ENCODE measurements at regions of chr6 and their contacts with region 1.

Region 1: GRCh38 chr6:42104095-42104806 is 38.2 kb downstream of the C6orf132 start:
- DNase-seq: peak; percentile 40 to 85 (median 62)
- ATAC-seq: peak; percentile 90
- H3K4me3 ChIP-seq: peak overlapping the region; percentile 49
- H3K4me3 Mint-ChIP-seq: peak overlapping the region; percentile 63
- H3K27ac ChIP-seq: no peak overlapping the region
- H3K27ac Mint-ChIP-seq: no peak overlapping the region
- H3K4me1 ChIP-seq: peaks cover 11% of the 10 kb centered on the region
- H3K4me1 Mint-ChIP-seq: peaks cover 8% of the 10 kb centered on the region
- H3K27me3 ChIP-seq: no peaks in the 10 kb centered on the region
- H3K27me3 Mint-ChIP-seq: no peaks in the 10 kb centered on the region
- CTCF ChIP-seq: peak; percentile 92

Region 2: GRCh38 chr6:41779793-41780545 is 324.3 kb before region 1 on chr6 and contains the start of gene FRS3:
- CTCF ChIA-PET with region 1: interaction called, 3 read pairs
- POLR2A ChIA-PET with region 1: no interaction called
- intact Hi-C with region 1: loop called in 1 of 2 experiments (anchors 2 kb)
- DNase-seq: peak; percentile 95 to 100 (median 99)
- ATAC-seq: peak; percentile 97
- H3K4me3 ChIP-seq: peak within 1 kb of the TSS; percentile 75
- H3K4me3 Mint-ChIP-seq: peak within 1 kb of the TSS; percentile 99
- H3K27ac ChIP-seq: no peak within 1 kb of the TSS
- H3K27ac Mint-ChIP-seq: peak within 1 kb of the TSS; percentile 68
- H3K4me1 ChIP-seq: peaks cover 24% of the 10 kb centered on the region
- H3K4me1 Mint-ChIP-seq: peaks cover 25% of the 10 kb centered on the region
- H3K27me3 ChIP-seq: peaks cover 7 to 8% of the 10 kb centered on the region in 2 experiments
- H3K27me3 Mint-ChIP-seq: peaks cover 11% of the 10 kb centered on the region
- CTCF ChIP-seq: peak; percentile 75
- total RNA-seq, gene FRS3: 4.6 to 5.4 TPM

Region 3: GRCh38 chr6:41846666-41847237 is 257.5 kb before region 1 on chr6:
- CTCF ChIA-PET with region 1: no interaction called
- POLR2A ChIA-PET with region 1: no interaction called
- intact Hi-C with region 1: loop called in 1 of 2 experiments (anchors 2 kb)
- DNase-seq: peak; percentile 18 to 77 (median 37)
- ATAC-seq: peak; percentile 78
- H3K4me3 ChIP-seq: no peak overlapping the region
- H3K4me3 Mint-ChIP-seq: no peak overlapping the region
- H3K27ac ChIP-seq: no peak overlapping the region
- H3K27ac Mint-ChIP-seq: no peak overlapping the region
- H3K4me1 ChIP-seq: no peaks in the 10 kb centered on the region
- H3K4me1 Mint-ChIP-seq: peaks cover 6% of the 10 kb centered on the region
- H3K27me3 ChIP-seq: no peaks in the 10 kb centered on the region
- H3K27me3 Mint-ChIP-seq: no peaks in the 10 kb centered on the region
- CTCF ChIP-seq: peak; percentile 91

Region 4: GRCh38 chr6:41901882-41902519 is 202.2 kb before region 1 on chr6:
- CTCF ChIA-PET with region 1: no interaction called
- POLR2A ChIA-PET with region 1: no interaction called
- intact Hi-C with region 1: loop called in 1 of 2 experiments (anchors 5 kb)
- DNase-seq: peak; percentile 32 to 81 (median 44)
- ATAC-seq: peak; percentile 74
- H3K4me3 ChIP-seq: no peak overlapping the region
- H3K4me3 Mint-ChIP-seq: no peak overlapping the region
- H3K27ac ChIP-seq: no peak overlapping the region
- H3K27ac Mint-ChIP-seq: no peak overlapping the region
- H3K4me1 ChIP-seq: peaks cover 8% of the 10 kb centered on the region
- H3K4me1 Mint-ChIP-seq: peaks cover 12% of the 10 kb centered on the region
- H3K27me3 ChIP-seq: no peaks in the 10 kb centered on the region
- H3K27me3 Mint-ChIP-seq: no peaks in the 10 kb centered on the region
- CTCF ChIP-seq: peak; percentile 64

Region 5: GRCh38 chr6:41970436-41970846 is 133.8 kb before region 1 on chr6:
- CTCF ChIA-PET with region 1: no interaction called
- POLR2A ChIA-PET with region 1: no interaction called
- intact Hi-C with region 1: no loop called
- DNase-seq: peak in 4 of 14 experiments; percentile 16 to 70 (median 43)
- ATAC-seq: peak; percentile 60
- H3K4me3 ChIP-seq: no peak overlapping the region
- H3K4me3 Mint-ChIP-seq: peak overlapping the region; percentile 26
- H3K27ac ChIP-seq: peak overlapping the region in 1 of 2 donors; percentile 4
- H3K27ac Mint-ChIP-seq: peak overlapping the region; percentile 89
- H3K4me1 ChIP-seq: peaks cover 62% of the 10 kb centered on the region
- H3K4me1 Mint-ChIP-seq: peaks cover 77% of the 10 kb centered on the region
- H3K27me3 ChIP-seq: no peaks in the 10 kb centered on the region
- H3K27me3 Mint-ChIP-seq: no peaks in the 10 kb centered on the region
- CTCF ChIP-seq: no peak